ENCODE measurements at regions of chr18 and their contacts with region 1.

Region 1: GRCh38 chr18:63741769-63742168 is 33.4 kb upstream of the SERPINB7 start:
- DNase-seq: no peak
- ATAC-seq: no peak
- H3K4me3 Mint-ChIP-seq: no peak overlapping the region
- H3K27ac Mint-ChIP-seq: no peak overlapping the region
- H3K4me1 Mint-ChIP-seq: 0 out of 2 replicates have a peak, but pooled peaks cover 2% of the 10 kb centered on the region
- H3K27me3 Mint-ChIP-seq: no peaks in the 10 kb centered on the region
- CTCF ChIP-seq: no peak

Region 2: GRCh38 chr18:63518178-63519012 is 223.4 kb before region 1 on chr18:
- CTCF ChIA-PET with region 1: interaction called, 52 read pairs
- POLR2A ChIA-PET with region 1: no interaction called
- DNase-seq: peak; percentile 66
- ATAC-seq: peak; percentile 90
- H3K4me3 Mint-ChIP-seq: no peak overlapping the region
- H3K27ac Mint-ChIP-seq: no peak overlapping the region
- H3K4me1 Mint-ChIP-seq: peaks cover 29% of the 10 kb centered on the region
- H3K27me3 Mint-ChIP-seq: no peaks in the 10 kb centered on the region
- CTCF ChIP-seq: peak; percentile 69

Region 3: GRCh38 chr18:63578357-63578958 is 163.3 kb before region 1 on chr18:
- CTCF ChIA-PET with region 1: interaction called, 19 read pairs
- POLR2A ChIA-PET with region 1: no interaction called
- DNase-seq: peak; percentile 39
- ATAC-seq: peak; percentile 67
- H3K4me3 Mint-ChIP-seq: no peak overlapping the region
- H3K27ac Mint-ChIP-seq: no peak overlapping the region
- H3K4me1 Mint-ChIP-seq: no peaks in the 10 kb centered on the region
- H3K27me3 Mint-ChIP-seq: no peaks in the 10 kb centered on the region
- CTCF ChIP-seq: peak; percentile 74